ENCODE measurements at regions of chr11 and their contacts with region 1.

Region 1: GRCh38 chr11:6705905-6706535 is 22.9 kb upstream of the MRPL17 start:
- DNase-seq: peak in 4 of 9 experiments; percentile 45 to 69 (median 52)
- ATAC-seq: peak; percentile 83
- H3K4me3 ChIP-seq: no peak overlapping the region
- H3K4me3 Mint-ChIP-seq: no peak overlapping the region
- H3K27ac ChIP-seq: peak overlapping the region in 1 of 2 experiments; percentile 1
- H3K27ac Mint-ChIP-seq: peak overlapping the region; percentile 80
- H3K4me1 ChIP-seq: no peaks in the 10 kb centered on the region
- H3K4me1 Mint-ChIP-seq: peaks cover 25% of the 10 kb centered on the region
- H3K27me3 ChIP-seq: no peaks in the 10 kb centered on the region
- H3K27me3 Mint-ChIP-seq: no peaks in the 10 kb centered on the region
- CTCF ChIP-seq: peak; percentile 90

Region 2: DNA sequence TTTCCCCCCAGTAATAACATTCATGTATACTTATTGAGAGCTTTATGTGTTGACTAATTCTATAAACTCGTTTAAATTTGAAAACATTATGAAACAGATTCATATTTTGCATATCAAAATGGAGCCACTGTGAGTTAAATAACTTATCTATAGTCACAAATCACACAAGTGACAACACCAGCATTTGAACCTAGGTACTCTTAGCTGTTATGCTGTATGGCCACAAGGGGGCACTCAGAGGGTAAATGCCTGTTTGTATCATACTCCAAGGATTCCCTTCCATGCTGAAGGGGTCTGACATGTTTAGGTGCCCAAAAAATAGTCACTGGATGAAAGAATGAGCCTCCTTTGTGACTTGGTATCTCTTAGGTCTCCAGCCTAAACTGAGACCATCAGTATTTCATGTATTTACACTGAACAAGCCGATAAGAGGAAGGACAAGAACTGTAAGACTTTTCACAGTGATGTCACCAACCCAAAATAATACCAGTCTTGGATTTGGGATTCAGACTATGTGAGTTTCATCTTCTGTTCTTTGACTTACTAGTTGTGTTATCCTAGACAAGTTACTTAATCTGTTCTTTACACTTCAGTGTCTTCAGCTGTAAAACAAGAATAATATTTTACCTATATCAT is 1229.7 kb before region 1 on chr11:
- CTCF ChIA-PET with region 1: no interaction called
- POLR2A ChIA-PET with region 1: no interaction called
- intact Hi-C with region 1: no loop called
- DNase-seq: peak in 6 of 9 experiments; percentile 2 to 58 (median 28)
- ATAC-seq: no peak
- H3K4me3 ChIP-seq: no peak overlapping the region
- H3K4me3 Mint-ChIP-seq: no peak overlapping the region
- H3K27ac ChIP-seq: no peak overlapping the region
- H3K27ac Mint-ChIP-seq: no peak overlapping the region
- H3K4me1 ChIP-seq: no peaks in the 10 kb centered on the region
- H3K4me1 Mint-ChIP-seq: no peaks in the 10 kb centered on the region
- H3K27me3 ChIP-seq: no peaks in the 10 kb centered on the region
- H3K27me3 Mint-ChIP-seq: peaks cover 10% of the 10 kb centered on the region
- CTCF ChIP-seq: peak; percentile 74

Region 3: GRCh38 chr11:6531267-6531752 is 174.7 kb before region 1 on chr11:
- CTCF ChIA-PET with region 1: interaction called, 18 read pairs
- POLR2A ChIA-PET with region 1: interaction called, 4 read pairs
- intact Hi-C with region 1: loop called (anchors 1 kb)
- DNase-seq: peak in 3 of 9 experiments; percentile 14 to 68 (median 56)
- ATAC-seq: peak; percentile 83
- H3K4me3 ChIP-seq: no peak overlapping the region
- H3K4me3 Mint-ChIP-seq: no peak overlapping the region
- H3K27ac ChIP-seq: no peak overlapping the region
- H3K27ac Mint-ChIP-seq: no peak overlapping the region
- H3K4me1 ChIP-seq: peaks cover 4% of the 10 kb centered on the region
- H3K4me1 Mint-ChIP-seq: peaks cover 7% of the 10 kb centered on the region
- H3K27me3 ChIP-seq: no peaks in the 10 kb centered on the region
- H3K27me3 Mint-ChIP-seq: no peaks in the 10 kb centered on the region
- CTCF ChIP-seq: peak; percentile 84

Region 4: DNA sequence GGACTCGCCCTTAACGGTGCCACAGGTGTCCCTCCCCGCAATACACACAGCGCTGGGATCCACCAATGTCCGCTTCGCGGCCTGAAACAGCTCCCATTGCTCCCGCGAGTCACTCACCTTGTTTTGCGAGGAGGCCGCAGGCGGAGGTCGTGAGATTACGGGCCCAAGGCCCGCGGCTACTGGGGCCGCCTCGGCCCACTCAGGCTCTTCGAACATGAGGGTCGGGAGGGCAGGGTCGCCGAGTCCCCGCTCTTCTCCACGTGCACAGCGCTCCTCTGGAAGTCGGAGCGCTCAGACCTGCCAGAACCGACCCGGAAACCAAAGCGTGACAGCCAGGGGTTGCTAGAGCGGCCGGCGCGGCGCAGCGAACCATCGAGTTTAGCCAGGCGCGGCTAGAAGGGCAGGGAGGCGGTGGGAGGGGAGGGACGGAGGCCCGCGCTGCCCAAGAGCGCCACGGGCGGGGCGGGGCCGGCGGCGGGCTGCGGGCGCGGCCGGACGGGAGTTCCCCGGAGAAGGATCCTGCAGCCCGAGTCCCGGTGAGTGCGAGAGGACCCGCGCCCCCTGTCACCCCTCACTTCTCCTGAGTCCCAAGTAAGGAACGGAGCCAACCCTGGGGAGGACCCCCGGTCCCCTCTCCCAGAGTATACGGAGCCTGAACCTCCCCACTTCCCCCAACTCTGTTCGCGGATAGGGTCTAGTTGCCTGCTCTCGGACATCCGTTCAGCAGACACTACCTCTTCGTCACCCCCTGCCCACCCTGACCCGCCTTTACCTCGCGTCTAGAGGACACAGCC is 102.5 kb before region 1 on chr11 and contains the starts of genes ILK and RRP8:
- CTCF ChIA-PET with region 1: interaction called, 17 read pairs
- POLR2A ChIA-PET with region 1: no interaction called
- intact Hi-C with region 1: loop called (anchors 1 kb)
- DNase-seq: peak; percentile 66 to 92 (median 87)
- ATAC-seq: peak; percentile 78
- H3K4me3 ChIP-seq: peak within 1 kb of the TSS; percentile 93 to 97
- H3K4me3 Mint-ChIP-seq: no peak within 1 kb of the TSS
- H3K27ac ChIP-seq: peak within 1 kb of the TSS; percentile 65 to 88
- H3K27ac Mint-ChIP-seq: no peak within 1 kb of the TSS
- H3K4me1 ChIP-seq: peaks cover 60% of the 10 kb centered on the region
- H3K4me1 Mint-ChIP-seq: peaks cover 40% of the 10 kb centered on the region
- H3K27me3 ChIP-seq: no peaks in the 10 kb centered on the region
- H3K27me3 Mint-ChIP-seq: no peaks in the 10 kb centered on the region
- CTCF ChIP-seq: no peak
- total RNA-seq, gene ILK: 26.6 to 31.6 TPM
- total RNA-seq, gene RRP8: 29.1 to 31.3 TPM

Region 5: DNA sequence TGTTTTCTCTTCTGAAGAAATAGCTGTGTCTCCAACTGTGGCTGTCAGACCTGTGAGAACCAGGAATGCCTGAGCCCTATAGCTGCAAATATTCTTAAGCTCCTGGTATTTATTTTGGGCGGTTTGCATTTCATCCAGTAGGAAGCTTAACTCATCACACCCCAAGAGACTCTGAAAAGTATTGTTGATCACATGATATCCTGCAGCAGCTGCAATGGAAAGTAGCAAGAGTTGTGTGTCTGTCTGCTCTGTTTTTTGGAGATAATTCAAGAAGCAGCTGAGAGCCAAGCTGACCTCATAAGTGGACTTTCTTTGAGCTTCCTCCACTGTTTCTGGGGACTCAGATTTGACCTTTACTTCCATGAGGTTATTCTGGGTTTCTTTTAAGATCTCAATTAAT is 13.6 kb after region 1 on chr11:
- CTCF ChIA-PET with region 1: interaction called, 30 read pairs
- POLR2A ChIA-PET with region 1: interaction called, 4 read pairs
- intact Hi-C with region 1: no loop called
- DNase-seq: no peak
- ATAC-seq: no peak
- H3K4me3 ChIP-seq: no peak overlapping the region
- H3K4me3 Mint-ChIP-seq: no peak overlapping the region
- H3K27ac ChIP-seq: no peak overlapping the region
- H3K27ac Mint-ChIP-seq: peak overlapping the region; percentile 76
- H3K4me1 ChIP-seq: peaks cover 49% of the 10 kb centered on the region
- H3K4me1 Mint-ChIP-seq: peaks cover 91% of the 10 kb centered on the region
- H3K27me3 ChIP-seq: no peaks in the 10 kb centered on the region
- H3K27me3 Mint-ChIP-seq: no peaks in the 10 kb centered on the region
- CTCF ChIP-seq: no peak

Region 6: GRCh38 chr11:6737872-6738466 is 31.9 kb after region 1 on chr11:
- CTCF ChIA-PET with region 1: interaction called, 51 read pairs
- POLR2A ChIA-PET with region 1: interaction called, 3 read pairs
- intact Hi-C with region 1: no loop called
- DNase-seq: peak; percentile 44 to 87 (median 69)
- ATAC-seq: peak; percentile 54
- H3K4me3 ChIP-seq: no peak overlapping the region
- H3K4me3 Mint-ChIP-seq: peak overlapping the region; percentile 9
- H3K27ac ChIP-seq: peak overlapping the region; percentile 1 to 8
- H3K27ac Mint-ChIP-seq: peak overlapping the region; percentile 87
- H3K4me1 ChIP-seq: peaks cover 91% of the 10 kb centered on the region
- H3K4me1 Mint-ChIP-seq: peaks cover 91% of the 10 kb centered on the region
- H3K27me3 ChIP-seq: no peaks in the 10 kb centered on the region
- H3K27me3 Mint-ChIP-seq: no peaks in the 10 kb centered on the region
- CTCF ChIP-seq: peak; percentile 59

Region 7: GRCh38 chr11:7442588-7443215 is 736.7 kb after region 1 on chr11:
- CTCF ChIA-PET with region 1: no interaction called
- POLR2A ChIA-PET with region 1: no interaction called
- intact Hi-C with region 1: loop called in 1 of 2 experiments (anchors 5 kb)
- DNase-seq: peak; percentile 39 to 79 (median 66)
- ATAC-seq: peak; percentile 72
- H3K4me3 ChIP-seq: no peak overlapping the region
- H3K4me3 Mint-ChIP-seq: no peak overlapping the region
- H3K27ac ChIP-seq: no peak overlapping the region
- H3K27ac Mint-ChIP-seq: no peak overlapping the region
- H3K4me1 ChIP-seq: no peaks in the 10 kb centered on the region
- H3K4me1 Mint-ChIP-seq: no peaks in the 10 kb centered on the region
- H3K27me3 ChIP-seq: no peaks in the 10 kb centered on the region
- H3K27me3 Mint-ChIP-seq: no peaks in the 10 kb centered on the region
- CTCF ChIP-seq: peak; percentile 95